Activated CD4-positive, alpha-beta memory T cell treated with anti-CD3 and anti-CD28 coated beads for 36 hours (primary cell): ENCODE measurements at regions of chr2 and their contacts with region 1.

Region 1: DNA sequence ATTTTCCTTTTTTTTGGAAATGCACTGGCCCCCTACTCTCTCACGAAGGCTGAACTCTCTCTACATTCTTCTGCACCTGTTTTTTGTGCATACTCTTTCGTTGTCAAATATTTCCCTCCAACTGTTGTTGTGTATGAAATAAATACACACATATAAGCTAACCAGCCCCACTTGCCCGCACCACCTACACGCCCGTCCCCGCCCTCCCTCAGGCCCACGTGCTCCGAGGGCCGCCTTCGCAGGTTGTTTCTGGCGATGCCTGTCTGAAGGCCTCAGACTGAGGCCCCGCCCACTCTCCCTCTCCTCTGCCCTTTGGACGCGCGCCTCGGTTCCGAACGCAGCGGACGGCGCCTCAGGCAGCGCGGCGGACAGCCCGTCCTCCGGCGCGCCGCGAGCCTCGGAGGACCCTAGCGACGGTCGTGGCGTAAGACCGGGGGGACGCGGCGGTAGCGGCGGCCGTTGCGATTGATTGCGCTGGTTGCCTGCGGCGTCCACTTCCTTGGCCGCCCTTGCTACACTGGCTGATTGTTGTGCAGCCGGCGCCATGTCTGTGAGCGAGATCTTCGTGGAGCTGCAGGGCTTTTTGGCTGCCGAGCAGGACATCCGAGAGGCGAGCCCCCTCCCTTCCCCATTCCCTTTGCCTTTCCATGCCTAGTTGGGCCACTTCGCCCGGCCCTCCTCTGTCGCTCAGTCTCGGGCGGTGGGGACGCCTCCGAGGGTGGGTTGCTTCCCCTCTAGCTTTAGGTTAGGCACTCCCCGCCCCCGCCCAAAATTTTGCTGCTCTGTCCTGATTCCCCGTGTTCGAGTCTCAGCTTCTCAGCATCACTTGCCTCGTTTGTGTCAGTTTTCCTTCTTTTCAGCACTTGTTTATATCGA is at the start of gene TSN:
- DNase-seq: peak; percentile 98
- H3K4me3 Mint-ChIP-seq: peak within 1 kb of the TSS; percentile 97
- H3K27ac Mint-ChIP-seq: peak within 1 kb of the TSS; percentile 80
- H3K4me1 Mint-ChIP-seq: peaks cover 27% of the 10 kb centered on the region
- H3K27me3 Mint-ChIP-seq: no peaks in the 10 kb centered on the region
- total RNA-seq, gene TSN: 68.8 to 74.5 TPM

Region 2: GRCh38 chr2:121736462-121737341 is 18.8 kb before region 1 on chr2 and contains the start of gene NIFK:
- CTCF ChIA-PET with region 1: no interaction called
- POLR2A ChIA-PET with region 1: interaction called, 4 read pairs
- intact Hi-C with region 1: loop called (anchors 1 kb)
- DNase-seq: peak; percentile 100
- H3K4me3 Mint-ChIP-seq: peak within 1 kb of the TSS; percentile 98
- H3K27ac Mint-ChIP-seq: peak within 1 kb of the TSS; percentile 89
- H3K4me1 Mint-ChIP-seq: peaks cover 32% of the 10 kb centered on the region
- H3K27me3 Mint-ChIP-seq: no peaks in the 10 kb centered on the region
- total RNA-seq, gene NIFK: 244 to 252 TPM

Region 3: DNA sequence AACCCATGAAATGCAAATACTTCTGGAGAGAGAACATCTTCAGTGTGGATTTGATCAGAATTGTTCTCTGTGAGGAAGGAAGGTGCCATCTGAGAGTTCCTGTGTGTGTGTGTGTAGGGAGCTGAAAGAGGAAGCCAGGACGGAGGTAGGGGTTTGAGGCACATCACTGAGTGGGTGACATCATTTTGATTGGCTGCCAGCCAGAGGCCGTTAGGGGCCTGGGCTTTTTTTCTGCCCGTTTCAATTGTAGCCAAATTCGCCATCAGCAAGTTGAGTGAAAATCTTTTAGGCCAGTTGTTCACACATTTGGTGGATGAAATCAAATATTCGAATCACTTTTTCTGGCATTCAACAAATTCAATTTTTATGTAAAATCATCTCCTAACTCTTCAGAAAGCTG is 48.9 kb after region 1 on chr2:
- CTCF ChIA-PET with region 1: no interaction called
- POLR2A ChIA-PET with region 1: no interaction called
- intact Hi-C with region 1: no loop called
- DNase-seq: no peak
- H3K4me3 Mint-ChIP-seq: no peak overlapping the region
- H3K27ac Mint-ChIP-seq: no peak overlapping the region
- H3K4me1 Mint-ChIP-seq: peaks cover 13% of the 10 kb centered on the region
- H3K27me3 Mint-ChIP-seq: peaks cover 19% of the 10 kb centered on the region